ENCODE measurements at regions of chr1 and their contacts with region 1.

Region 1: DNA sequence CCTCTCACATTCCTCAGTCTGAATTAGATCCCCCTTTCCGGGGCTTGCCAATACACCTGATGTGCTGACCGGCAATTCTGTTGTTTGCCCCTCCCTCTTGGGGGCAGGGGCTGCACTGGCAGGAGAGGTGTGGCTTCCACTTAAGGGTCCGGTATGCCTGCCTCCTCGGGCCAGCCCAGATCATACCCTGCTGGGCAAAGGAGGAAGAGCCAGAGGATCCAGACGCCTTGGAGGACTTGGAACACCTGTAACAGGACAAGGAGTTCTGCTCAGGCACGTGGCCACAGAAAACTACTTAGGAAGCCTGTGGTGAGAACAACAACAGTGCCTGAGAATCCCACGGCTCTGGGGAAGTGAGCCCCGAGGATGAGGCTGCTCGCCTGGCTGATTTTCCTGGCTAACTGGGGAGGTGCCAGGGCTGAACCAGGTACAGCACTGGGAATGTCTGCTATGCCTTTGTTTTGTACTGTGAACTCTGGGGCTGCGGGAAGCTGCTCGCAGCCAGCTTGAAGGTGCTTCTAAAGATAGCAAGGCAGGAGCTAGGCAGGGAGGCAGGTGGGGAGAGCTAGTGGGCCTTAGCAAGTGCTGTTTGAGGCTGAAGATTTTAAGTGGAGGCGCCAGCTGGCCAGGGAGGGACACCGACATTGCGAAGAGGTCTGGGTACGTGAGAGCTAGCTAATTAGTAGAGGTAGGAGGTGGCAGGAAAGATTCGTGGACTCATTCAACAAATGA is at the start of gene SMPDL3B:
- DNase-seq: no peak
- H3K4me3 ChIP-seq: no peak within 1 kb of the TSS
- H3K4me3 Mint-ChIP-seq: peak within 1 kb of the TSS in 2 of 7 donors; percentile 26 to 43
- H3K27ac ChIP-seq: no peak within 1 kb of the TSS
- H3K27ac Mint-ChIP-seq: peak within 1 kb of the TSS in 2 of 8 donors; percentile 9 to 74
- H3K4me1 ChIP-seq: peaks cover 5% of the 10 kb centered on the region
- H3K4me1 Mint-ChIP-seq: peaks cover 6 to 25% (median 8%) of the 10 kb centered on the region in 3 donors
- H3K27me3 ChIP-seq: no peaks in the 10 kb centered on the region
- H3K27me3 Mint-ChIP-seq: peaks cover 10 to 12% of the 10 kb centered on the region in 2 donors
- total RNA-seq, gene SMPDL3B: 0.27 TPM in 1 of 2 experiments, not detected in the other

Region 2: DNA sequence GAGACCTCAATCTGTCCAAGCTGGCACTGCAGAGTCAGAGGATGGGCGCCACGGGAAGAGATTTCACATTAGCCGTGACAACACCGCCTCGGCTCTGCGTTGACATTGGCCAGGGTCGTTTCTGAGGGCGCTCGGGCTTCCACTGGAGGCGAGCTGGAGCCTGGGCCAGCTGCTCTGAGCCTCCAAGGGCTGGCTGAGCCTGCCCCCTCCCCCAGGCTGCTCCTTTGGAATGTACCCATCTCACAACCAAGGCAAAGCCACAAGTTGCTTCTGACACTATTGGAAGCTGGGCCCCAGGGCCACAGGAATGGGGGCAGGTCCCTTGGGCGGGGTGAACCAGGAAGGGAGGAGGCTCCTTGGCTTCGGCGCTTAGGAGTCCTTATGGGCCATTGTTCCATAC is 529.9 kb before region 1 on chr1:
- CTCF ChIA-PET with region 1: no interaction called
- POLR2A ChIA-PET with region 1: interaction called, 10 read pairs
- DNase-seq: no peak
- H3K4me3 ChIP-seq: no peak overlapping the region
- H3K4me3 Mint-ChIP-seq: no peak overlapping the region
- H3K27ac ChIP-seq: no peak overlapping the region
- H3K27ac Mint-ChIP-seq: peak overlapping the region in 2 of 8 donors; percentile 50 to 94
- H3K4me1 ChIP-seq: peaks cover 17% of the 10 kb centered on the region
- H3K4me1 Mint-ChIP-seq: peaks cover 14 to 19% (median 15%) of the 10 kb centered on the region in 3 donors
- H3K27me3 ChIP-seq: no peaks in the 10 kb centered on the region
- H3K27me3 Mint-ChIP-seq: peaks cover 0 to 1% of the 10 kb centered on the region in 2 donors

Region 3: DNA sequence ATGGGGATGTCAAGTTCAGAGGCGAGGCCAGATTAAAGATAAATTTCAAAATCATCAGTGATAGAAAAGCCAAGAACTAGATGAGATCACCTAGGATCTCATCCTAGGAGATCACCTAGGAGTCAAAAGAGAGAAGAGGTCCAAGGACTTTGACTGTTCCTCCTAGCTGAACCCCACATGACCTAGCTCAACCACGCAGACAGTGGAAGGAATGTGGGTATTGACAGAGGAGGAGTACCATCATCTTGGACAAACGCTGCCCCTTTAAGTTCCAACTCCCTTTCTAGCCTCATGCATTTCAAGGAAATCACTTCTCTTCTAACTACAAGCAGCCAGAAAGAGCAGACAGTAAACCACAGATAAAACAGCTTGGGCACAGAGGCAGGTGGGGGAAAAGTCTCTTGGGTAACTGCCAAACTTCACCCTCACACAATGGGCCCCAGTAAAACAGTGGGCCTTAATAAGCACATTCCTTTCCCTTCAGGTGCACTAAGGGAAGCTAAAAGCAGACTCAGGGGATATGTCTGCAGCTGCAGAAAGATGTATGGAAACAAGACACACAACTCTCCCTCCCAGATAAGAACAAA is 221.8 kb before region 1 on chr1:
- CTCF ChIA-PET with region 1: no interaction called
- POLR2A ChIA-PET with region 1: no interaction called
- DNase-seq: no peak
- H3K4me3 ChIP-seq: no peak overlapping the region
- H3K4me3 Mint-ChIP-seq: no peak overlapping the region
- H3K27ac ChIP-seq: no peak overlapping the region
- H3K27ac Mint-ChIP-seq: no peak overlapping the region
- H3K4me1 ChIP-seq: no peaks in the 10 kb centered on the region
- H3K4me1 Mint-ChIP-seq: no peaks in the 10 kb centered on the region
- H3K27me3 ChIP-seq: no peaks in the 10 kb centered on the region
- H3K27me3 Mint-ChIP-seq: peaks cover 20 to 45% of the 10 kb centered on the region in 2 donors

Measured in CD8-positive, alpha-beta memory T cell (primary cell).